Activated CD8-positive, alpha-beta T cell treated with anti-CD3 and anti-CD28 coated beads, Interleukin-2, amount 10 ng/mL, durations not matched to agents 7 days and 5 days (primary cell): ENCODE measurements at regions of chr16 and their contacts with region 1.

Region 1: GRCh38 chr16:30534368-30535105 is at the start of gene ZNF747:
- DNase-seq: peak; percentile 94
- ATAC-seq: peak; percentile 83
- H3K4me3 Mint-ChIP-seq: peak within 1 kb of the TSS; percentile 85
- H3K27ac Mint-ChIP-seq: peak within 1 kb of the TSS; percentile 95
- H3K4me1 Mint-ChIP-seq: peaks cover 42% of the 10 kb centered on the region
- H3K27me3 Mint-ChIP-seq: no peaks in the 10 kb centered on the region
- total RNA-seq, gene ZNF747: 8.9 to 10.8 TPM

Region 2: DNA sequence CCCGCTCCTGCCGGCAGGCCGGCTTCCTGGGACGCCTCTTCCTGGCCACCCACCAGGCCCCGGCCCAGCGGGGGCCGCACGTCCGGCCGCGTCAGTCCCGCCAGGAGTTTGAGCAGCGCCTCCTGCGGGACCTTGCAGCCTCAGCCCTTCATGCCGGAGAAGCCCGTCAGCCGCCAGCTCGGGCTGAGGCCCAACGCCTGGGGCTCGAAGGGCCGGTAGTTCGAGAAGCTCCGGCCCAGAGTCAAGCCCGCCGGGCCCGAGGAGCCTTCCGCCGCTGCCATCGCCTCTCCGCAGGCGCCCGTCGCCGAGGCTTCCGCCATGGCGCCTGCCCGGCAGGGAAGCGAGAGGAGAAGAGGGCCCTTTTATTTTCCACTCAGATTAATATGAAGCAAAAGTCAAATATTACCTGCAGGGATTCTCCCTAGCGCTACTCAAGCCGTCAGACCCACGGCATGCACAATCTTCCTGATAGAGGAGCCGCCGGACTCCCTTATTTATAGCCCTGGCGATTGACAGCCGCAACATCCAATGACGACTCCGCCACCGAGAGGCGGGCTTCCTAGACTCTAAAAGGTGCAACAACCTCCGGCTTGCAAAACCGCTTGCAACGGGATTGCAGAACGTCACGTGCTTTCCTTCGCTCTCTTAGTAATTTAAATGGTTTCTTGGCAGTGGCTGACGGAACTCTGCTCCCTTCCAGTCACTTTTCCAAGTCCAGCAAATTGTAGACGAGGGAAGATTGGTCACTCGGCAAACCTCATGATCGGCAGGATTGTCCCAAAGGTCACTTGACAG is 88.9 kb before region 1 on chr16 and contains the start of gene SEPHS2:
- CTCF ChIA-PET with region 1: interaction called, 13 read pairs
- POLR2A ChIA-PET with region 1: no interaction called
- DNase-seq: peak; percentile 98
- ATAC-seq: peak; percentile 97
- H3K4me3 Mint-ChIP-seq: peak within 1 kb of the TSS; percentile 90
- H3K27ac Mint-ChIP-seq: peak within 1 kb of the TSS; percentile 94
- H3K4me1 Mint-ChIP-seq: peaks cover 52% of the 10 kb centered on the region
- H3K27me3 Mint-ChIP-seq: no peaks in the 10 kb centered on the region
- total RNA-seq, gene SEPHS2: 64.6 to 68.7 TPM

Region 3: GRCh38 chr16:30519120-30520049 is 15.2 kb before region 1 on chr16:
- CTCF ChIA-PET with region 1: interaction called, 12 read pairs
- POLR2A ChIA-PET with region 1: interaction called, 18 read pairs
- DNase-seq: peak; percentile 54
- ATAC-seq: peak; percentile 47
- H3K4me3 Mint-ChIP-seq: no peak overlapping the region
- H3K27ac Mint-ChIP-seq: peak overlapping the region; percentile 50
- H3K4me1 Mint-ChIP-seq: peaks cover 40% of the 10 kb centered on the region
- H3K27me3 Mint-ChIP-seq: no peaks in the 10 kb centered on the region

Region 4: DNA sequence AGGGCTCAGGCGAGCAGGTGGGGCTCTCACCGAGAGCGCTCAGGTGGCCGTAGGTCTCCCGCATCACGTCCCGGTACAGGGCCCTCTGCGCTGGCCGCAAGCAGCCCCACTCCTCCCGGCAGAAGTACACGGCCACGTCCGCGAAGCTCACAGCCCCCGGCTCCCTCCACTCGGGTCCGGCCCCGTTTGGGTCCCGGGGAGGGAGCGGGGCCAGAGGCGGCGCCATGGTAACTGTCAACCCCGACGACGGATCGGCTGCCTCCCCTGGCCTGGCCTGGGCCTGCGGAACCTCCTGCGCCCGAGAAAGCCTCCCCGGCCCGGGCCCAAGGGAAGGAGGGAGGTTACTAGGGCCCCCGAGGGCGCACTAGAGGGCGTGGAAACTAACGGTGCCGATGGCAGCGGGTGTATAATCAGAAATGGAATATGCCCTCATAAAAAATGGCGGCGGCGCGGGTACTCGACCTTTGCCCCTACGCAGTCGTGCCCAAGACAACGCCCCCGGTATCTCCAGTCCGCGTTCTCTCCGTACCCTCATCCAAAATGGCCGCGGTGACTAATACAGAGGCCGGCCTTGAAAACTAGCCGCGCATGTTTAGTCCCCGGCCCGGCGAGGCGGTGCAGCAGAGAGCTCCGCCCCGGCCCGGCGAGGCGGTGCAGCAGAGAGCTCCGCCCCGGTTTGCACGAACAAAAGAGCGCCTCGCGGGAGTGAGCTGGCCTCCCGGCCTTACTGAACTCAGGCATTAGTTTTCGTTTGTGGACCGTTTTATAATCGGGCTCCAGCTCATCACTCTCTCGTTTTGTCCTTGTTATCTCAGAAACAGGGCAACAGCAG is 23.6 kb after region 1 on chr16 and contains the start of gene ZNF764:
- CTCF ChIA-PET with region 1: interaction called, 76 read pairs
- POLR2A ChIA-PET with region 1: interaction called, 80 read pairs
- DNase-seq: peak; percentile 99
- ATAC-seq: peak; percentile 96
- H3K4me3 Mint-ChIP-seq: peak within 1 kb of the TSS; percentile 87
- H3K27ac Mint-ChIP-seq: peak within 1 kb of the TSS; percentile 86
- H3K4me1 Mint-ChIP-seq: peaks cover 46% of the 10 kb centered on the region
- H3K27me3 Mint-ChIP-seq: peaks cover 3% of the 10 kb centered on the region
- total RNA-seq, gene ZNF764: 15.2 to 15.4 TPM

Region 5: GRCh38 chr16:30585400-30586189 is 51.1 kb after region 1 on chr16 and contains the start of gene ZNF785:
- CTCF ChIA-PET with region 1: interaction called, 9 read pairs
- POLR2A ChIA-PET with region 1: interaction called, 19 read pairs
- DNase-seq: peak; percentile 98
- ATAC-seq: peak; percentile 98
- H3K4me3 Mint-ChIP-seq: peak within 1 kb of the TSS; percentile 96
- H3K27ac Mint-ChIP-seq: peak within 1 kb of the TSS; percentile 87
- H3K4me1 Mint-ChIP-seq: peaks cover 30% of the 10 kb centered on the region
- H3K27me3 Mint-ChIP-seq: no peaks in the 10 kb centered on the region
- total RNA-seq, gene ZNF785: 11.7 to 13.7 TPM

Region 6: DNA sequence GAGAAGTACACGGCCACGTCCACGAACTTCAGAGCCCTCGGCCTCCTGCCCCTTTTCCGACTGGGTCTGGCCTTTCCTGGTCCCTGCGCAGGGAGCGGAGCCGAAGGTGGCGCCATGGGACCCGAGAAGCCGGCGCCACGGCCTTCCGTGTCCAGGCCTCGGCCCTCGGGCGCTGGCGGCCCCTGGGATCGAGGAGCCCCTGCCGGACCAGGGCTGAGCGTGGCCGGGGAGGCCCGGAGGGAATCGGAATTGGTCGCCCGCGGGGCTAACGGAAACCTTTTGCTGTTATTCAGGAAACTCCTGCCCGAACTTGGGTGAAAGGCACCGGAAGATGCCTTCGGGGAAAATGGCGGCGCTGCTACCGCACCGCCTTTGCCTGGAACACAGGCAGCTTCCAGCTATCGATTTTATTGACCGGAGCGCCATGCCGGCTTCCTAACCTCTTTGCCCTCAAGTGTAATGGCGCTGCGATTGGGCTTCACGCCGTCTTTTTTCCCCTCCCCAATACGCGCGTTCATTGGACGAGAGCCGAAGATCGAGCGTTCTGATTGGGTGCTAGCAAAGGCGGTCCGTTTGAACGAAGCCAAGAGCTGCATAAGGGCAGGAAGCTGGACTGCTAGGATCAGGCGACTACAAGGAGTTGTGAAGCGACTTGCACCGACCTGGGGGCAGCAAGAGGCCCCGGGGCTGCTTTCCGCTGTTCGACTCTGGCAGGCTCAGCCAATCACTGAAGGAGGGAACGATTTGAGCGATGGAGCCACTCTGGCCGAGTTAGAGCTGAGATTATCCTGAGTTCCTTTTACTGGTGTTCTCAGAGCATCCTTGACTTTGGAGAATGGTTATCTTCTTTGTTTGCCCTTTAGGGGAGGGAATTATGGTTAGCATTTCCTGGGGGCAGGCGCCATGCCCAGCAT is 75.6 kb after region 1 on chr16 and contains the start of gene ZNF689:
- CTCF ChIA-PET with region 1: interaction called, 22 read pairs
- POLR2A ChIA-PET with region 1: interaction called, 25 read pairs
- DNase-seq: peak; percentile 97
- ATAC-seq: peak; percentile 92
- H3K4me3 Mint-ChIP-seq: peak within 1 kb of the TSS; percentile 84
- H3K27ac Mint-ChIP-seq: peak within 1 kb of the TSS; percentile 96
- H3K4me1 Mint-ChIP-seq: peaks cover 19% of the 10 kb centered on the region
- H3K27me3 Mint-ChIP-seq: no peaks in the 10 kb centered on the region
- total RNA-seq, gene ZNF689: 12.0 to 13.4 TPM

Region 7: DNA sequence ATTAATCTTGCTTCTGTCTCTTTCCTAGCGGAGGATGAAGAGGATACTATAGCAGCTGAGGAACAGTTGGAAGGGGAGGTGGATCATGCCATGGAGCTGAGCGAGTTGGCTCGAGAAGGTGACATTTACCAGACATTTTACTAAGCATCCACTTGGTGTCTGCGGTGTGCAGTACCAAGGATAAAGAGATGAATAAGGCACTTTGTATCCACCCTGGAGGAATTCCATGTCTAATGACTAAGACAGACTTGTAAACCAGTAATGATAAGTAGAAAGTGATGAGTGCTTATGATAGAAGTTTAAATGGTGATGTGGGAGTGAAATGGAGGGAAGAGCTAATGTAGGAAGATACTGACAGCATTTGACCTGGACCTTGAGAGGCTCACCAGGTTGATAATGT is 176.4 kb after region 1 on chr16:
- CTCF ChIA-PET with region 1: no interaction called
- POLR2A ChIA-PET with region 1: no interaction called
- DNase-seq: no peak
- ATAC-seq: no peak
- H3K4me3 Mint-ChIP-seq: no peak overlapping the region
- H3K27ac Mint-ChIP-seq: no peak overlapping the region
- H3K4me1 Mint-ChIP-seq: peaks cover 24% of the 10 kb centered on the region
- H3K27me3 Mint-ChIP-seq: no peaks in the 10 kb centered on the region